GM13976 (cell line): ENCODE measurements at regions of chr5 and their contacts with region 1.

Region 1: GRCh38 chr5:54229041-54229780 is 81.2 kb downstream of the ARL15 start:
- DNase-seq: peak; percentile 48
- CTCF ChIP-seq: peak; percentile 88

Region 2: DNA sequence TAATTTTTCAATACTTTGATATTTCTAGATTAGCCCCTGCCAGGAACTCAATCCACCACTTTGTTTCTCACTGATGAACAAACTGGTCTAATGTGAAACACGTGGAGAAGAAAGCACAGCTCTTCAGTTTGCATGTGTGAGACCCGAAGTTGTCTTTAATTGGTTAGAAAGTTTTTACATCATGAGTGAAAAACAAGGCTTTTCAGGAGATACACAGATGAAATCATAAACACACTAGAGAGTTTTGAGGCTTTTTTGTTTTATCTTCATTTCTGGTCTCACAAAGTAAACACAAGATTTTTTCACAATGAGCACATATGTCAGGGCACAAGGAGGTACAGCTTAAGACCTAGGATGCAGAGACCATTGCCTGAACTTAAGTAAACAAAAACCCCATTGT is 1035.1 kb before region 1 on chr5:
- in situ Hi-C with region 1: loop called (anchors 25 kb)
- DNase-seq: no peak
- CTCF ChIP-seq: no peak